ENCODE measurements at regions of chr19 and their contacts with region 1.

Region 1: GRCh38 chr19:52527134-52527955 is at the start of gene ZNF808:
- DNase-seq: peak; percentile 91 to 97 (median 91)
- H3K4me3 ChIP-seq: peak within 1 kb of the TSS; percentile 78 to 98
- H3K4me3 Mint-ChIP-seq: peak within 1 kb of the TSS; percentile 96 to 100 (median 99)
- H3K27ac ChIP-seq: peak within 1 kb of the TSS; percentile 91
- H3K27ac Mint-ChIP-seq: peak within 1 kb of the TSS; percentile 94 to 99 (median 99)
- H3K4me1 ChIP-seq: peaks cover 19% of the 10 kb centered on the region
- H3K4me1 Mint-ChIP-seq: peaks cover 18 to 36% (median 26%) of the 10 kb centered on the region in 4 donors
- H3K27me3 ChIP-seq: no peaks in the 10 kb centered on the region
- H3K27me3 Mint-ChIP-seq: peaks cover 0 to 1% of the 10 kb centered on the region in 2 donors
- total RNA-seq, gene ZNF808: 61.7 to 65.2 TPM

Region 2: GRCh38 chr19:52397310-52398080 is 129.8 kb before region 1 on chr19 and contains the start of gene ZNF528:
- CTCF ChIA-PET with region 1: no interaction called
- POLR2A ChIA-PET with region 1: no interaction called
- intact Hi-C with region 1: loop called (anchors 5 kb)
- DNase-seq: peak; percentile 85 to 93 (median 88)
- H3K4me3 ChIP-seq: peak within 1 kb of the TSS; percentile 89 to 98
- H3K4me3 Mint-ChIP-seq: peak within 1 kb of the TSS; percentile 86 to 95 (median 90)
- H3K27ac ChIP-seq: peak within 1 kb of the TSS; percentile 56
- H3K27ac Mint-ChIP-seq: peak within 1 kb of the TSS; percentile 76 to 93 (median 92)
- H3K4me1 ChIP-seq: peaks cover 14% of the 10 kb centered on the region
- H3K4me1 Mint-ChIP-seq: peaks cover 13 to 29% (median 22%) of the 10 kb centered on the region in 4 donors
- H3K27me3 ChIP-seq: no peaks in the 10 kb centered on the region
- H3K27me3 Mint-ChIP-seq: no peaks in the 10 kb centered on the region
- total RNA-seq, gene ZNF528: 44.6 to 49.9 TPM

Region 3: DNA sequence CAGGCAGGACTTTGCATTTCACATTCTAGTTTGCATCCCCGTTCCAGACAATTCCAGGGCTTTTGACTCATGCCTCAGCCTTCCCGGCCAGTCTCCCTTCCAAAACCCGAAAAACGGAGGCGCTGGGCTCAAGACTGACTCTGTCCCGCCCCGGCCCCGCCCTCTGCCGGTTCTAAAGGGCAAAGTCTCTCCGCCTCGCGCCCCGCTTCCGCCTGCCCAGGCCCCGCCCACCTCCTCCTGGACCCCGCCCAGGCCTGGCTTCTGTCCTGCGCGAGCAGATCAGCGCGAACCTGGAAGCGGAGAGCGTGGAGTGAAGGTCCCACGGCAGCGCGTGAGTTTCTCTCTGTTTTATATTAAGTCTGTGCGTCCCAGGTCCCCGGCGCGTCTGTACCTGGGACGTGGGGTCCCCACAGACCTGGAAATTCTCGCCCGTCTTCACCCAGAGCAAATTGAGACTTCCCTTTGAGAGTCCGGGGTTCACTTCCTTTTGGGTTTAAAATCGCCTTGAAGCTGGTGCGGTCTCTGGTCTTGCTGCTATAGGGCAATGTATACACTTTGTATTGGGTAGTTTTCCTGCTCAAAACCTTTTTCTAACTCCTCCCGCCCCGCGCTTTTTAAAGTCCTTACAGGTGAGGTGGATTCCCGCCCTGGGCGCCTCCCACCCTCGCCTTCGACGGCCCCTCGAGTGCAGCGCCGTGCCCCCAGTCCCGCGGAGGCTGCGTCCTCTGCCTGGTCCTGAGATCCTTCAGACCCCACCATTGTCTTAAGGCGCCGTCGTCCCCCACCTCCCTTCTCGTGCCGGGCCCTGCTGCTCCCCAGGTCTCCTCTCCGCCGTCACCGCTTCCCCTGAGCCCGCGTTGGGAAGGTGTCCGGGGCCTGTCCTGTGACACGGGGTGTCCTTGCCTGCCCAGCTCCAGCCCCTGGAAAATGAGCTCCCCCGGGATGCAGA is 74.0 kb after region 1 on chr19:
- CTCF ChIA-PET with region 1: no interaction called
- POLR2A ChIA-PET with region 1: interaction called, 3 read pairs
- intact Hi-C with region 1: loop called (anchors 1 kb)
- DNase-seq: peak; percentile 90 to 92 (median 90)
- H3K4me3 ChIP-seq: peak overlapping the region; percentile 57 to 63
- H3K4me3 Mint-ChIP-seq: peak overlapping the region; percentile 93 to 97 (median 94)
- H3K27ac ChIP-seq: peak overlapping the region; percentile 66
- H3K27ac Mint-ChIP-seq: peak overlapping the region; percentile 65 to 96 (median 93)
- H3K4me1 ChIP-seq: peaks cover 15% of the 10 kb centered on the region
- H3K4me1 Mint-ChIP-seq: peaks cover 16 to 40% (median 27%) of the 10 kb centered on the region in 4 donors
- H3K27me3 ChIP-seq: no peaks in the 10 kb centered on the region
- H3K27me3 Mint-ChIP-seq: no peaks in the 10 kb centered on the region

Region 4: GRCh38 chr19:52690369-52691214 is 163.2 kb after region 1 on chr19:
- CTCF ChIA-PET with region 1: no interaction called
- POLR2A ChIA-PET with region 1: no interaction called
- intact Hi-C with region 1: loop called (anchors 1 kb)
- DNase-seq: peak; percentile 86 to 92 (median 89)
- H3K4me3 ChIP-seq: peak overlapping the region; percentile 66 to 90
- H3K4me3 Mint-ChIP-seq: peak overlapping the region; percentile 90 to 99 (median 96)
- H3K27ac ChIP-seq: peak overlapping the region; percentile 78
- H3K27ac Mint-ChIP-seq: peak overlapping the region; percentile 88 to 96 (median 94)
- H3K4me1 ChIP-seq: peaks cover 23% of the 10 kb centered on the region
- H3K4me1 Mint-ChIP-seq: peaks cover 18 to 35% (median 26%) of the 10 kb centered on the region in 4 donors
- H3K27me3 ChIP-seq: no peaks in the 10 kb centered on the region
- H3K27me3 Mint-ChIP-seq: no peaks in the 10 kb centered on the region

Region 5: DNA sequence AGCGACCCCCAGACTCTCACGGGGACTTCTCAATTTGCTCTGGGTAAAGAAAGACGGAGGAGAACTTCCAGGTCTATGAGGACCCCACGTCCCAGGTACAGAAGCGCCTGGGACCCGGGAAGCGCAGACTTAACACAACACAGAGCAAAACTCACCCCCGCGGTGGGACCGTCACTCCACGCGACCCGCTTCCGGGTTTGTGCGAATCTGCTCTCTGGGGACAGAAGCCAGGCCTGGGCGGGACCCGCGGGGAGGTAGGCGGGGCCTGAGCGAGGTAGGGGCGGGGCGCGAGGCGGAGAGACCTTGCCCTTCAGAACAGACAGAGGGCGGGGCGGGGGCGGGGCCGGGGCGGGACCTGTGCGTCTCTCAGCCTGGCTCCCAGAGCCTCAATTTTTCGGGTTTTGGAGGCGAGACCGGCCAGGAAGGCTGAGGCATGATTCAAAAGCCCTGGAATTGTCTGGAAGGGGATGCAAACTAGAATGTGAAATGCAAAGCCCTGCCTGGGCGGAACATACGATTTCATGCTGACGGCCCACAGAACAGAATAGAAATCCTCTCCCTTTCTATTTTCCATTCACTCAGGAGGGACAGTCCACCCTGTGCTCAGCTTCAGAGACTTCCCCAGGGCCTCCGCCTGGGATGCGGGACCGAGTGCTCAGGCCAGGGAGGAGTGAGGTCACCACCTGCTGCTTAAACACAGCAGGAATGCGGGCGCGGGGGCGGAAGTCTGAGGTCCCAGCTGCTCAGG is 415.2 kb after region 1 on chr19:
- CTCF ChIA-PET with region 1: no interaction called
- POLR2A ChIA-PET with region 1: no interaction called
- intact Hi-C with region 1: loop called (anchors 5 kb)
- DNase-seq: peak; percentile 95 to 98 (median 97)
- H3K4me3 ChIP-seq: peak overlapping the region; percentile 68 to 84
- H3K4me3 Mint-ChIP-seq: peak overlapping the region; percentile 88 to 98 (median 96)
- H3K27ac ChIP-seq: peak overlapping the region; percentile 72
- H3K27ac Mint-ChIP-seq: peak overlapping the region; percentile 91 to 98 (median 95)
- H3K4me1 ChIP-seq: peaks cover 17% of the 10 kb centered on the region
- H3K4me1 Mint-ChIP-seq: peaks cover 10 to 32% (median 24%) of the 10 kb centered on the region in 4 donors
- H3K27me3 ChIP-seq: no peaks in the 10 kb centered on the region
- H3K27me3 Mint-ChIP-seq: no peaks in the 10 kb centered on the region

Region 6: DNA sequence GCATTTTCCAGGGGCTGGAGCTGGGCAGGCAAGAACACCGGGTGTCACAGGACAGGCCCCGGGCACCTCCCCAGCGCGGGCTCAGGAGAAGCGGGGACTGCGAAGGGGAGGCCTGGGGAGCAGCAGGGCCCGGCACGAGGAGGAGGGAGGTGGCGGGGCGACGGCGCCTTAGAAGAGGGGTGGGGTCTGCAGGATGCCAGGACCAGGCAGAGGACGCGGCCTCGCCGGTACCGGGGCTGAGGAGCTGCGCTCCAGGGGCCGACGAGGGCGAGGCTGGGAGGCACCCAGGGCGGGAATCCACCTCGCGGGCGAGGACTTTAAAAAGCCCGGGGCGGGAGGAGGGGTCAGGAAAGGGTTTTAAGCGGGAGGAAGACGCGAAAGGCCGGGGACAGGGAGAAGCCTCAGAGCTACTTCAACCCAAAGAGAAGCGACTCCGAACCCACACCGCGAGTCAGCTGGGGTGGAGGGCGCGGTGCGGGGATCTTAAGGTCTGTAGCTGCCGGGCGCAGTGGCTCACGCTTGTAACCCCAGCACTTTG is 630.8 kb after region 1 on chr19:
- CTCF ChIA-PET with region 1: no interaction called
- POLR2A ChIA-PET with region 1: no interaction called
- intact Hi-C with region 1: loop called (anchors 1 kb)
- DNase-seq: peak in 3 of 5 donors; percentile 12 to 57 (median 21)
- H3K4me3 ChIP-seq: peak overlapping the region; percentile 29 to 58
- H3K4me3 Mint-ChIP-seq: peak overlapping the region; percentile 86 to 89 (median 88)
- H3K27ac ChIP-seq: peak overlapping the region; percentile 44
- H3K27ac Mint-ChIP-seq: peak overlapping the region in 6 of 7 donors; percentile 82 to 90 (median 88)
- H3K4me1 ChIP-seq: peaks cover 18% of the 10 kb centered on the region
- H3K4me1 Mint-ChIP-seq: peaks cover 11 to 30% (median 13%) of the 10 kb centered on the region in 4 donors
- H3K27me3 ChIP-seq: no peaks in the 10 kb centered on the region
- H3K27me3 Mint-ChIP-seq: peaks cover 0 to 6% of the 10 kb centered on the region in 2 donors

Measured in CD4-positive, alpha-beta memory T cell (primary cell).